ENCODE measurements at regions of chr1 and their contacts with region 1.

Region 1: DNA sequence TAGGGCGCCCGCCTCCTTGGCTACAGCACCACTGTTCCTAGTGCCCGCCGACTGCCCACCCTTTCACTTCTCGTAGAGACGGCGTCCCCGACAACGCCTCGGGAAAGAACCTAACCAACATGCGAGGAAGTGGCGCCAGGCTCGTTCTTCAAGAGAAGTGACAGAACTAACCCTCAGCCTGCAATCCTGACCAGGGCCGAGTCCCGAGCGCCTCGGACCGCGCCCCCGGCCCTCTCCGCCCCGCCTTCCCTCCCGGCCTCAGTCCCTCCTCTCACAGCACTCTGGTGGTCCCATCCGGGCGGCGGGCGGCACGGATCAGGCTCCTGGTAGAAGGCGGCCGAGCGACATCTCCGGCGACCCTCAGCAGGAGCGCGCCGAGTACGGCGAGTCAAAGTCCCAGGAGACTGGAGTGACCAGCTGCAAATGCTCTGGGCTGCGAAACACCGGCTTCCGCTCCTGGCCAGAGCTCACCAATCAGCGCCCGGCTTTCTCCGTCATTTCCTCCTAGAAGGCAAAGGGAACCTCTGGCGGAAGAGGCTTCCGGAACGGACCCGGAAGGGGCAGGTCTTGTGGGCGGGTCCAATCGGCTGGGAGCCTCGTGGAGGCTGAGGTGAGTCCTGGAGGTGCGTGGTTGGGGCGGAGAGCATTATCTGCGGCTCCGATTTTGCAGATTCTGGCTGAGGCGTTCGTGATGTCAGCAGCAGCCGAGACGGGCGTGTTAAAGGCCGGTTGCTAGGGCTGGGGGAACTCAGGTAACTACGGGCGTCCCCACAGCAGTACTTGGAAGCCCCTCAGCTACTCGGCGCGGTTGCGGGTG is at the starts of genes GDAP2 and WDR3:
- DNase-seq: peak; percentile 98
- ATAC-seq: peak; percentile 83
- H3K4me3 ChIP-seq: peak within 1 kb of the TSS; percentile 86
- H3K27ac ChIP-seq: peak within 1 kb of the TSS; percentile 31
- H3K4me1 ChIP-seq: peaks cover 53% of the 10 kb centered on the region
- H3K27me3 ChIP-seq: no peaks in the 10 kb centered on the region
- CTCF ChIP-seq: no peak
- total RNA-seq, gene GDAP2: 17.7 and 20.7 TPM in 2 replicates
- total RNA-seq, gene WDR3: 38.2 and 57.8 TPM in 2 replicates

Region 2: GRCh38 chr1:117821782-117822447 is 107.5 kb before region 1 on chr1:
- CTCF ChIA-PET with region 1: no interaction called
- POLR2A ChIA-PET with region 1: no interaction called
- intact Hi-C with region 1: no loop called
- DNase-seq: peak; percentile 97
- ATAC-seq: peak; percentile 76
- H3K4me3 ChIP-seq: no peak overlapping the region
- H3K27ac ChIP-seq: peak overlapping the region; percentile 81
- H3K4me1 ChIP-seq: peaks cover 42% of the 10 kb centered on the region
- H3K27me3 ChIP-seq: no peaks in the 10 kb centered on the region
- CTCF ChIP-seq: no peak

Region 3: DNA sequence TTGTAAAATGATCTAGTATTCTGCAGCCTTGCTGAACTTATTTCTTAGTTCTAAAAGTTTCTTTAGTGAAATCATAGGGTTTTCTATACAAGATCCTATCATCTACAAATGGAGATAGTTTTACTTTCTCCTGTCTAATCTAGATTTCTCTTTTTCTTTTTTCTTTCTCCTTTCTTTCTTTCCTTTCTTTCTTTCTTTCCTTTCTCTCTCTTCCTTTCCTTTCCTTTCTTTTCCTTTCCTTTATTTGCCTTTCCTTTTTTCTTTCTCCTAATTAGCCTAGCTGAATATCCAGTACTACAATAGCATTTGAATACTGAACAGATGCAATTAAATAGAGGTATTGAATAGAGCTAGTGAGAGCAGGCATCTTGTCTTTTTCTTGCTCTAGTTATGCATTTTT is 442.2 kb after region 1 on chr1:
- CTCF ChIA-PET with region 1: no interaction called
- POLR2A ChIA-PET with region 1: interaction called, 17 read pairs
- intact Hi-C with region 1: no loop called
- DNase-seq: no peak
- ATAC-seq: no peak
- H3K4me3 ChIP-seq: no peak overlapping the region
- H3K27ac ChIP-seq: no peak overlapping the region
- H3K4me1 ChIP-seq: no peaks in the 10 kb centered on the region
- H3K27me3 ChIP-seq: no peaks in the 10 kb centered on the region
- CTCF ChIP-seq: no peak

Measured in PC-3 (cell line).